ENCODE measurements at regions of chr6 and their contacts with region 1.

Region 1: GRCh38 chr6:166627033-166627874 is at the start of gene RPS6KA2:
- DNase-seq: peak; percentile 100
- H3K4me3 ChIP-seq: peak within 1 kb of the TSS; percentile 70 to 98 (median 88)
- H3K27ac ChIP-seq: peak within 1 kb of the TSS; percentile 70 to 99 (median 93)
- H3K27me3 ChIP-seq: no peaks in the 10 kb centered on the region
- CTCF ChIP-seq: peak in 44 of 56 donors; percentile 4 to 65 (median 34)
- total RNA-seq, gene RPS6KA2: 66.5 to 123 (median 91.5) TPM

Region 2: DNA sequence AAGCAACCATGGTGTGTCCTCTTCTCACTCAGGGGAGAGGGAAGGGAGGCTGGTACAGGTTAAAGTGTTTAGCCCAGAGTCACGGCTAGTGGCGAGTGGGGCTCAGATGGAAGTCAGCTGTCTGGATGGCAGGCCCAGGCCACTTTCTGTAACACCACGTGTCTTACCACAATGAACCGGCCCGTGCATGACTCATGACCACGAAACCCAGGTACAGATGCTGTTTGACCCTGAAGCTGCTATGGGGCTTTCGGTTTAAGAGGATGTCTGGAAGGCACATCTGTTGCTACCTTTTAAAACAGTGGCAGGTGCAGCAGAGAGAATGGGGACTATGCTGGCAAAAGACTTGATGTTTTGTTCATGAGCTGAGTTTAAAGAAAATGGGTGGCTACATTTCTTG is 208.0 kb before region 1 on chr6:
- intact Hi-C with region 1: loop called (anchors 2 to 5 kb)
- DNase-seq: peak in 1 of 10 donors; percentile 30
- H3K4me3 ChIP-seq: no peak overlapping the region
- H3K27ac ChIP-seq: peak overlapping the region in 5 of 59 donors; percentile 7 to 89 (median 11)
- H3K27me3 ChIP-seq: no peaks in the 10 kb centered on the region
- CTCF ChIP-seq: no peak

Region 3: GRCh38 chr6:166515072-166515810 is 112.0 kb before region 1 on chr6:
- intact Hi-C with region 1: loop called (anchors 2 to 5 kb)
- DNase-seq: peak in 7 of 10 donors; percentile 22 to 92 (median 76)
- H3K4me3 ChIP-seq: peak overlapping the region in 1 of 59 donors; percentile 7
- H3K27ac ChIP-seq: peak overlapping the region in 37 of 59 donors; percentile 2 to 69 (median 37)
- H3K27me3 ChIP-seq: no peaks in the 10 kb centered on the region
- CTCF ChIP-seq: peak in 36 of 56 donors; percentile 8 to 59 (median 32)

Measured in dorsolateral prefrontal cortex (tissue), 120 donors.